ENCODE measurements at regions of chr12 and their contacts with region 1.

Region 1: GRCh38 chr12:74563927-74564326 is 26.3 kb downstream of the ATXN7L3B start:
- DNase-seq: no peak
- ATAC-seq: no peak
- H3K4me3 ChIP-seq: no peak overlapping the region
- H3K4me3 Mint-ChIP-seq: no peak overlapping the region
- H3K27ac ChIP-seq: no peak overlapping the region
- H3K27ac Mint-ChIP-seq: no peak overlapping the region
- H3K4me1 ChIP-seq: no peaks in the 10 kb centered on the region
- H3K4me1 Mint-ChIP-seq: no peaks in the 10 kb centered on the region
- H3K27me3 ChIP-seq: peaks cover 0 to 5% of the 10 kb centered on the region in 2 experiments
- H3K27me3 Mint-ChIP-seq: peaks cover under 1% of the 10 kb centered on the region
- CTCF ChIP-seq: no peak

Region 2: GRCh38 chr12:74515849-74516248 is 48.1 kb before region 1 on chr12:
- CTCF ChIA-PET with region 1: no interaction called
- POLR2A ChIA-PET with region 1: no interaction called
- intact Hi-C with region 1: loop called in 1 of 2 experiments (anchors 5 kb)
- DNase-seq: no peak
- ATAC-seq: no peak
- H3K4me3 ChIP-seq: no peak overlapping the region
- H3K4me3 Mint-ChIP-seq: no peak overlapping the region
- H3K27ac ChIP-seq: no peak overlapping the region
- H3K27ac Mint-ChIP-seq: no peak overlapping the region
- H3K4me1 ChIP-seq: no peaks in the 10 kb centered on the region
- H3K4me1 Mint-ChIP-seq: no peaks in the 10 kb centered on the region
- H3K27me3 ChIP-seq: no peaks in the 10 kb centered on the region
- H3K27me3 Mint-ChIP-seq: peaks cover 20% of the 10 kb centered on the region
- CTCF ChIP-seq: no peak

Region 3: DNA sequence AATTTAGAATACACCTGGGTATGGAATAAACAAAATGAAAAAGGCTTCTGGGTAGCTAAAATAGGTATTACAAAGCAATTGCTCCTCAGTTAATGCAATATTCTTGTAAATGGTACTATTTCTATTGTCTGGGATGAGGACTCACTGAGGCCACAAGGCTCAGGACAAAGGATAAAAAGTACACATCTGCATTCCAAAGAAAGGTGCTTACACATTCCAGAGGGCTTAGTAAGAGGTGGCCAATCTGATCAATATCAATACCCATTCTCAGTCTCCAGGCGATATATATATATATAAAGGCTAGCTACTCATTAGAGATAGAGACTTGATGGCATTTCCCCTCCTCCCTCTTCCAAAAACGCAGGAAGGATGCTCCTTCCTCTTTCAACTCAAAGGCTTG is 17.5 kb after region 1 on chr12:
- CTCF ChIA-PET with region 1: no interaction called
- POLR2A ChIA-PET with region 1: no interaction called
- intact Hi-C with region 1: no loop called
- DNase-seq: no peak
- ATAC-seq: no peak
- H3K4me3 ChIP-seq: no peak overlapping the region
- H3K4me3 Mint-ChIP-seq: no peak overlapping the region
- H3K27ac ChIP-seq: no peak overlapping the region
- H3K27ac Mint-ChIP-seq: no peak overlapping the region
- H3K4me1 ChIP-seq: no peaks in the 10 kb centered on the region
- H3K4me1 Mint-ChIP-seq: no peaks in the 10 kb centered on the region
- H3K27me3 ChIP-seq: no peaks in the 10 kb centered on the region
- H3K27me3 Mint-ChIP-seq: peaks cover 6% of the 10 kb centered on the region
- CTCF ChIP-seq: no peak

Measured in CD8-positive, alpha-beta T cell (primary cell).